Heart right ventricle (tissue), 16 donors: ENCODE measurements at regions of chr1 and their contacts with region 1.

Region 1: DNA sequence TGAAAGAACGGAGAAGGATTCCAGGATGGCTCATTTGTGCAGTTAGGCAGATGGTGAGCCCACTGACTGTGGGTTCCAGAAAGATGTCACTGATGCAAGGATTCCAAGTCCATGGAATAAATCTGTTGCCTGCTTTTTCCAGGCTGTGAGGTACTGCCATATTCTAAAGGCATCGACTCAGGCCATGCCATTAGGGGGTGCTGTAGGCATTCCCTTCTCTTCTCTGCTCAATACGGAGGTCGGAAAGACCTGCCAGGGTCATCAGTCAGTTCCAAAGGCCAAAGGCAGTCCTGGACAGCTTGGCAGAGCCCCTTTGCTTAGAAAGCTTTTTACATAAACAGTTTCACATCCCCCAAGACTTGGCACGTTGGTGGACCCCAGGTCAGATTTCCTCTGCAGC is 31.7 kb upstream of the TMEM125 start:
- DNase-seq: peak; percentile 39 to 83
- ATAC-seq: peak; percentile 72 to 92 (median 82)
- H3K4me3 ChIP-seq: no peak overlapping the region
- H3K27ac ChIP-seq: peak overlapping the region in 6 of 10 donors; percentile 14 to 56 (median 40)
- H3K4me1 ChIP-seq: peaks cover 4 to 50% (median 24%) of the 10 kb centered on the region in 9 donors
- H3K27me3 ChIP-seq: no peaks in the 10 kb centered on the region
- CTCF ChIP-seq: peak; percentile 60 to 84 (median 76)

Region 2: GRCh38 chr1:43300378-43301094 is 62.5 kb after region 1 on chr1 and contains the start of gene TIE1:
- intact Hi-C with region 1: loop called in 5 of 10 experiments (anchors 1 to 5 kb)
- DNase-seq: peak; percentile 52 to 80
- ATAC-seq: peak; percentile 68 to 89 (median 83)
- H3K4me3 ChIP-seq: peak within 1 kb of the TSS; percentile 32 to 63 (median 50)
- H3K27ac ChIP-seq: peak within 1 kb of the TSS; percentile 71 to 94 (median 84)
- H3K4me1 ChIP-seq: peaks cover 7 to 79% (median 40%) of the 10 kb centered on the region in 9 donors
- H3K27me3 ChIP-seq: no peaks in the 10 kb centered on the region
- CTCF ChIP-seq: no peak
- total RNA-seq, gene TIE1: 19.9 to 55.8 (median 28.4) TPM

Region 3: DNA sequence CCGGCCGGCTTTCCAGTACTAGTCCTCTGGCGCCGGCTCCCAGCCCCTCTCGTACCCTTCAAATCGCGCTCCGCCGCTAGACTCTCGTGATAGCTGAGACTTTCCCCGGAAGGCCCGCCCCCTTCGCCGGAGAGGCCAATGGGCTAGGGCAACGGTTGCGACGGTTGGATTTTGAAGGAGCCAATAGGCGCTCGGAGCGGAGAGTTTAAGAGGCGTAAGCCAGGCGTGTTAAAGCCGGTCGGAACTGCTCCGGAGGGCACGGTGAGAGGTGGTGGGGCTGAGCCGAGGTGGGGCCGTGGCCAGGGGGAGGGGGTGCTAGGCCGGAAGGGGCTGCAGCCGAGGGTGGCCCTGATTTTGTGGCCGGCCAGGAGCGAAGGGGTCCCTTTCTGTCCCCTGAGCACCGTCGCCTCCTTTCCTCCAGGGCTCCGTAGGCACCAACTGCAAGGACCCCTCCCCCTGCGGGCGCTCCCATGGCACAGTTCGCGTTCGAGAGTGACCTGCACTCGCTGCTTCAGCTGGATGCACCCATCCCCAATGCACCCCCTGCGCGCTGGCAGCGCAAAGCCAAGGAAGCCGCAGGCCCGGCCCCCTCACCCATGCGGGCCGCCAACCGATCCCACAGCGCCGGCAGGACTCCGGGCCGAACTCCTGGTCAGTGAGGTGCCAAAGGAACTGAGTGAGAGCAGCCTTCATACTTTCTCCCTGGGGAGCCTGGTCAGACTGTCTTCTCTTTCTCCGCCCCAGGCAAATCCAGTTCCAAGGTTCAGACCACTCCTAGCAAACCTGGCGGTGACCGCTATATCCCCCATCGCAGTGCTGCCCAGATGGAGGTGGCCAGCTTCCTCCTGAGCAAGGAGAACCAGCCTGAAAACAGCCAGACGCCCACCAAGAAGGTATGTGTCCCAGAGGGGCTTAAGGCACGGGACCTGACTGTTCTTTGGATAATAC is 120.9 kb after region 1 on chr1 and contains the start of gene CDC20:
- intact Hi-C with region 1: loop called in 3 of 10 experiments (anchors 1 to 5 kb)
- DNase-seq: peak; percentile 99
- ATAC-seq: peak; percentile 98 to 99 (median 99)
- H3K4me3 ChIP-seq: peak within 1 kb of the TSS; percentile 2 to 83 (median 72)
- H3K27ac ChIP-seq: peak within 1 kb of the TSS; percentile 72 to 97 (median 94)
- H3K4me1 ChIP-seq: peaks cover 2 to 41% (median 13%) of the 10 kb centered on the region in 9 donors
- H3K27me3 ChIP-seq: no peaks in the 10 kb centered on the region
- CTCF ChIP-seq: no peak
- total RNA-seq, gene CDC20: 0.15 to 9.6 (median 1.5) TPM

Region 4: DNA sequence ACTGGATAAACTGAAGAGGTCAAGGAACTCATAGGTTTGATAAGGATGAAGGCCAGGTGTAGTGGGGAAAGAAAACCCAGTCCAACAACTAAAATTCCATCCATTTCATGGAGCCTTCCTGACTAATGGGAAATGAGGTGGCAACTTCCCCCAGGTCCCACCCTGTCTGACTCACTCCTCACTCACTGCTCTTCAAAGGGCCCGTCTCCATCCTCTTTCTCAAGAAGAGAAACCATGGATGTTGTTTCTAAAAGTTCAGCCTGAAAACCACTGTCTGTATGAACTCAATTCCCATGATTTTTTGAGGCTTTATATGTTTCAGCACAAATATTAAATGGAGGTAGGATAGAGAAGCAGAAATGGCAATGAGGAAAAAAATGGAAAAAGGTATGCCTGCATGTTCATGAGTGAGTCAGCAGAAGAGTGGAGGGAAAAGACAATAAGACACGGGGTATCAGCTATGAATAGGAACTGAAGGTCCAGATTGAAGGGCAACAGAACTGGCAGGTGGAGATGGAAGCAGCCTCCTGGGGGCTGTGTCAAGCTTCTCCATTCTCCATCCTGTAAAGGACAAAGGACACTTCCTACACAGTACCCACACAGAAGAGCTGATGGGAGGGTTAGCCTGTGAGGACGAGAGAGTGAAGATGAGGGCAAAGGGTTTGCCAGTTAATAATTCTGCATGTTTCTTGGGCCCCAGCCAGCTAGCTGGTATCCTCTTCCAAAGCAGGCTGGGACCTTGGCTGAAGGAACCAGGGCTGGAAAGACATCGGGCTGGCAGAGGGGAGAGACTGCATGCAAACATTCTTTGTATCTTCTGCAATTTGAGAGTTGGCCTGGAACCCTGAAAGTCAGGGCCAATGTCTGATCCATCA is 135.2 kb after region 1 on chr1:
- intact Hi-C with region 1: loop called in 5 of 10 experiments (anchors 5 to 10 kb)
- DNase-seq: no peak
- ATAC-seq: peak in 4 of 8 donors; percentile 26 to 49 (median 35)
- H3K4me3 ChIP-seq: no peak overlapping the region
- H3K27ac ChIP-seq: peak overlapping the region in 9 of 10 donors; percentile 4 to 84 (median 34)
- H3K4me1 ChIP-seq: peaks cover 13 to 44% (median 21%) of the 10 kb centered on the region in 9 donors
- H3K27me3 ChIP-seq: no peaks in the 10 kb centered on the region
- CTCF ChIP-seq: no peak

Region 5: GRCh38 chr1:43389326-43390313 is 151.5 kb after region 1 on chr1 and contains the starts of genes MED8 and SZT2:
- intact Hi-C with region 1: loop called in 4 of 10 experiments (anchors 5 to 10 kb)
- DNase-seq: peak; percentile 93 to 97
- ATAC-seq: peak; percentile 97 to 99 (median 99)
- H3K4me3 ChIP-seq: peak within 1 kb of the TSS; percentile 68 to 94 (median 78)
- H3K27ac ChIP-seq: peak within 1 kb of the TSS; percentile 52 to 94 (median 88)
- H3K4me1 ChIP-seq: peaks cover 9 to 36% (median 28%) of the 10 kb centered on the region in 9 donors
- H3K27me3 ChIP-seq: no peaks in the 10 kb centered on the region
- CTCF ChIP-seq: no peak
- total RNA-seq, gene MED8: 10.5 to 22.5 (median 13.9) TPM
- total RNA-seq, gene SZT2: 20.5 to 38.3 (median 26.0) TPM

Region 6: GRCh38 chr1:43414634-43415223 is 176.6 kb after region 1 on chr1:
- intact Hi-C with region 1: loop called in 2 of 10 experiments (anchors 2 to 5 kb)
- DNase-seq: peak in 1 of 2 donors; percentile 50
- ATAC-seq: peak; percentile 73 to 88 (median 82)
- H3K4me3 ChIP-seq: no peak overlapping the region
- H3K27ac ChIP-seq: no peak overlapping the region
- H3K4me1 ChIP-seq: peaks cover 0 to 10% (median 0%) of the 10 kb centered on the region in 9 donors
- H3K27me3 ChIP-seq: no peaks in the 10 kb centered on the region
- CTCF ChIP-seq: peak; percentile 38 to 77 (median 69)